Activated CD8-positive, alpha-beta memory T cell treated with anti-CD3 and anti-CD28 coated beads, Interleukin-2, amount 10 ng/mL, durations not matched to agents 7 days and 5 days (primary cell): ENCODE measurements at regions of chr1 and their contacts with region 1.

Region 1: DNA sequence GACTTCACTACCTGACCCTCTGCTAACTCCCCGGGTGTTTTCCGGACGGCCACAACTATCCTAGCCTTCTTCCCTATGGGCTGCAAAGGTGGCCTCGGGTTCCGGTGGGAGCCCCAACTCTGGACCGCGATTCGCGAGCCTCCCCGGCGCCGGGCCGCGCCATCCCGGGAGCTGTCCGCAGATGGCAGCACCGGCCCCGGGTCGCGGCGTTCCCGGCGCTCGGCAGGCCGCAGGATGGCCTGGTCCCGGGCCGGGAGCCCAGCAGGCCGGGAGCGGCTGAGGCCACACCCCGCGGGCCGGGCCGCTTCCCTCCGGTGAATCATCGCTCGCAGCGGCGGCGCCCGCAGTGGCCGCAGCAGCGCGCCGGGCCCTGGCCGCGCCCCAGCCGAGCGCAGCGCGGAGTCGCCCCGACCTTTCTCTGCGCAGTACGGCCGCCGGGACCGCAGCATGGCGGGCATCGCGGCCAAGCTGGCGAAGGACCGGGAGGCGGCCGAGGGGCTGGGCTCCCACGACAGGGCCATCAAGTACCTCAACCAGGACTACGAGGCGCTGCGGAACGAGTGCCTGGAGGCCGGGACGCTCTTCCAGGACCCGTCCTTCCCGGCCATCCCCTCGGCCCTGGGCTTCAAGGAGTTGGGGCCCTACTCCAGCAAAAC is at the start of gene CAPN2:
- DNase-seq: peak; percentile 75
- ATAC-seq: peak; percentile 65
- H3K4me3 Mint-ChIP-seq: peak within 1 kb of the TSS; percentile 84
- H3K27ac Mint-ChIP-seq: peak within 1 kb of the TSS; percentile 96
- H3K4me1 Mint-ChIP-seq: peaks cover 53% of the 10 kb centered on the region
- H3K27me3 Mint-ChIP-seq: no peaks in the 10 kb centered on the region
- total RNA-seq, gene CAPN2: 183 to 255 TPM

Region 2: DNA sequence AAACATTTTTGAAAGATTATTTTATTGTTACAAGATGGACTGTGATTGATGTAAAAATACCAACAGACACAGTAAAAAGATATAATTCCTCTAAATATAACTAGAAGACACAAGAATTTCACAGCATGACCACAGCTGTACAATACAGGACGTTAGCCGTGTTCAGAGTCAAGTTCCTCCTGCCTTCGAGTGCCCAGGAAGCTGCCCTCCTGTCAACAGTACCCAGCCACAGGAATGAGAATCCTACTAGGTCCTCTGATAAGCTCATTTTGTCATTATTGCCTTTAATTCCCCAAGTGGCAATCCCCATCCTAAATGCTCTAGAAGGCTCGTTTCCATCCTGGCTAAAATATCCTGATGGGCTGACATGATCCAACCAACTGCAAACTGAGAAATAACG is 16.4 kb before region 1 on chr1:
- CTCF ChIA-PET with region 1: interaction called, 11 read pairs
- DNase-seq: no peak
- ATAC-seq: no peak
- H3K4me3 Mint-ChIP-seq: no peak overlapping the region
- H3K27ac Mint-ChIP-seq: no peak overlapping the region
- H3K4me1 Mint-ChIP-seq: peaks cover 17% of the 10 kb centered on the region
- H3K27me3 Mint-ChIP-seq: no peaks in the 10 kb centered on the region

Region 3: DNA sequence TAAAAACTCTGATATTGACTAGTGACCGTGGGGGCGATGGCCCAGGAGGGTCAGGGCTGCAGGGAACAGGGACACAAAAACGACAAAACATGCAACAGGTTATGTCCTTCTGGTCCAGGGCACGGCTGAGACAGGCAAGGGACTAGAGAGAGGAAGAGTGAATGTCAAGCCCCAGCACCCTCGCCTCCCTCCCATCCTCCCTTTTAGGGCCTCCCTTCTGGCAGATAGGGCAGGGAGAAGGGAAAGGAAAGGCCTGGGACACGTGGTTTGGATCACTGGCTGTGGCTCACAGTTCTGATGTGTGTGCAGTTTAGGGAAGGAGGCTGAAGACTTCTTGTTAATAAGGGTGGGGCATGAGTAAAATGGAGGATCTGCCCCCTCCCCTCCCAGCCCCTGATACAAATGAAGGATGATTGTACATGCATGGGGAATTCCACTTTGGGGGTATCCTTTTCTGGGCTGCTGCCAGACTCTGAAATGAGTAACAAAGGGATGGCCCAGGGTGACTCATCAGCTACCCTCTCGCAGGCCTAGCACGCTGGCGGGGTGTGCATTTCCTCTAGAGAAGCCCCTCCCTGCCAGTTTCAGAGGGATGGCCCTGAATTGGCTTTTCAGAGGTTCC is 14.2 kb after region 1 on chr1:
- CTCF ChIA-PET with region 1: interaction called, 21 read pairs
- DNase-seq: peak; percentile 94
- ATAC-seq: peak; percentile 99
- H3K4me3 Mint-ChIP-seq: peak overlapping the region; percentile 49
- H3K27ac Mint-ChIP-seq: peak overlapping the region; percentile 89
- H3K4me1 Mint-ChIP-seq: peaks cover 79% of the 10 kb centered on the region
- H3K27me3 Mint-ChIP-seq: no peaks in the 10 kb centered on the region

Region 4: GRCh38 chr1:223765036-223765718 is 52.9 kb after region 1 on chr1:
- CTCF ChIA-PET with region 1: no interaction called
- DNase-seq: no peak
- ATAC-seq: no peak
- H3K4me3 Mint-ChIP-seq: no peak overlapping the region
- H3K27ac Mint-ChIP-seq: no peak overlapping the region
- H3K4me1 Mint-ChIP-seq: peaks cover 8% of the 10 kb centered on the region
- H3K27me3 Mint-ChIP-seq: no peaks in the 10 kb centered on the region